Ascending aorta (tissue), 2 donors: ENCODE measurements at regions of chr20 and their contacts with region 1.

Region 1: DNA sequence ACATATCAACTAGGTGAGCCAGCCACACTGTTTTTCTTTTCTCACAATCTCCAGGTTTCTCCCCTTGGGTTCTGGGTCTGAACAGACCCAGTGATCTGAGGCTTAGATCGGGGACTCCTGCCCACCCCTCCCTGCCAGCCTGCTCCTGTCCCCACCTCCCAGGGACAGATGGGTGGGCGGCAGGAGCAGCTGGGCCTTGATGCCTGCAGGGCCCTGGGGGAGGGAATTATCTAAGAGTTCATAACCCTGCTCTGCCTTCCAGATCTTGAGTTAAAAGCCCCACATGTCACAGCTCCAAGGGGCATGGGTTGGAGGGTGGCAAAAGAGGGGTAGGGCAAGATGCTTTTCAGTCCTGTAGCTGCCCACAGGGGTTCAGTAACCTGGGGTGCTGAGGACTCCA is 5.2 kb upstream of the XKR7 start:
- DNase-seq: no peak
- H3K4me3 ChIP-seq: no peak overlapping the region
- H3K27ac ChIP-seq: no peak overlapping the region
- H3K4me1 ChIP-seq: no peaks in the 10 kb centered on the region
- H3K27me3 ChIP-seq: peaks cover 1% of the 10 kb centered on the region
- CTCF ChIP-seq: no peak

Region 2: GRCh38 chr20:31537890-31538289 is 424.9 kb before region 1 on chr20:
- intact Hi-C with region 1: loop called (anchors 5 kb)
- DNase-seq: no peak
- H3K4me3 ChIP-seq: no peak overlapping the region
- H3K27ac ChIP-seq: no peak overlapping the region
- H3K4me1 ChIP-seq: no peaks in the 10 kb centered on the region
- H3K27me3 ChIP-seq: no peaks in the 10 kb centered on the region
- CTCF ChIP-seq: no peak